ENCODE measurements at regions of chr3 and their contacts with region 1.

Region 1: DNA sequence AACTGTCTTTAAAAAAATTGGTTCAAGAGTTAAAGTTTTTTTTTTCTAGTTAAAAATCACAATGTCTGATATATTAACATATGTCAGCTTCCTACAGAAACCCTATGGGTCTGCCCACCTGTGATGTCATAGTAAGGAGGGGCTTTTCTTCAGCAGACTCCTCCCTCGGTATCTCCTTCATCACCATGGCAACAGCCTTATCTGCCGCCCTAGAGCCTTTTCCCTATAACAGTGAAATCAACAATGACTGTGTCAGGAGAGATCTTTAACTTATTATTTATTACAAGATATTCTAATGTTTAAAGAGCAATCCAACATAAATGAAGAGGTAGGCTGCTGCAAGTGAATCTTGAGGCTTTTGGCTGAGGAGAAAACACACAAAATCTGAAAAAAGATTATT is 138.7 kb downstream of the PEX5L start:
- DNase-seq: no peak
- H3K4me3 ChIP-seq: no peak overlapping the region
- H3K27ac ChIP-seq: no peak overlapping the region
- H3K4me1 ChIP-seq: no peaks in the 10 kb centered on the region
- H3K27me3 ChIP-seq: peaks cover 17% of the 10 kb centered on the region
- CTCF ChIP-seq: no peak
- EP300 ChIP-seq: no peak
- POLR2A ChIP-seq: no peak

Region 2: DNA sequence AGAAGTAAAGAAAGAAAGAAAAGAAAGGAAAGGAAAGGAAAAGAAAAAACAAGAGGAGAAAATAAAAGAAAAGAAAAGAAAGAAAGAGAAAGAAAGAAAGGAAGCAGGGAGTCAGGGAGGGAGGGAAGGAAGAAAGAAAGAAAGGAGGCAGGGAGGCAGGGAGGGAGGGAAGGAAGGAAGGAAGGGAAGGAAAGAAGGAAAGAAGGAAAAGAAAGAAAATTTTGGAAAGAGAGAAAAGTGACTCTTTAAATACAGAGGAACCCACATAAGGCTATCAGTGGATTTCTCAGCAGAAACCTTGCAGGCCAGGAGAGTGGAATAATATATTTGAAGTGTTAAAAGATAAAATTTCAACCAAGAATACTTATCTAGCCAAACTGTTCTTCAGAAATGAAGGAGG is 402.5 kb before region 1 on chr3:
- in situ Hi-C with region 1: no loop called
- intact Hi-C with region 1: loop called (anchors 5 kb)
- DNase-seq: no peak
- H3K4me3 ChIP-seq: no peak overlapping the region
- H3K27ac ChIP-seq: no peak overlapping the region
- H3K4me1 ChIP-seq: no peaks in the 10 kb centered on the region
- H3K27me3 ChIP-seq: no peaks in the 10 kb centered on the region
- CTCF ChIP-seq: no peak
- EP300 ChIP-seq: no peak
- POLR2A ChIP-seq: no peak

Region 3: GRCh38 chr3:179624451-179624850 is 273.6 kb before region 1 on chr3:
- in situ Hi-C with region 1: no loop called
- intact Hi-C with region 1: no loop called
- DNase-seq: no peak
- H3K4me3 ChIP-seq: no peak overlapping the region
- H3K27ac ChIP-seq: no peak overlapping the region
- H3K4me1 ChIP-seq: no peaks in the 10 kb centered on the region
- H3K27me3 ChIP-seq: no peaks in the 10 kb centered on the region
- CTCF ChIP-seq: no peak
- EP300 ChIP-seq: no peak
- POLR2A ChIP-seq: no peak

Measured in transverse colon (tissue), 4 donors.